GM12878 (cell line): ENCODE measurements at regions of chr16 and their contacts with region 1.

Region 1: GRCh38 chr16:83952940-83953795 is at the start of gene OSGIN1:
- DNase-seq: peak; percentile 25
- ATAC-seq: peak; percentile 91
- H3K4me3 ChIP-seq: 0 out of 2 replicates have a peak within 1 kb of the TSS, but pooled peaks have one; percentile 16
- H3K27ac ChIP-seq: no peak within 1 kb of the TSS
- H3K4me1 ChIP-seq: peaks cover 3% of the 10 kb centered on the region; the same call in 1 of the 2 replicates
- H3K27me3 ChIP-seq: no peaks in the 10 kb centered on the region
- CTCF ChIP-seq: no peak
- EP300 ChIP-seq: no peak
- POLR2A ChIP-seq: peak; percentile 57
- RAD21 ChIP-seq: no peak
- polyA plus RNA-seq, gene OSGIN1: not detected

Region 2: GRCh38 chr16:84308120-84308519 is 355.0 kb after region 1 on chr16:
- CTCF ChIA-PET with region 1: no interaction called
- POLR2A ChIA-PET with region 1: no interaction called
- RAD21 ChIA-PET with region 1: no interaction called
- SMC1A ChIA-PET with region 1: no interaction called
- in situ Hi-C with region 1: no loop called
- intact Hi-C with region 1: loop called (anchors 10 kb)
- DNase-seq: no peak
- ATAC-seq: peak; percentile 78
- H3K4me3 ChIP-seq: no peak overlapping the region
- H3K27ac ChIP-seq: no peak overlapping the region
- H3K4me1 ChIP-seq: no peaks in the 10 kb centered on the region
- H3K27me3 ChIP-seq: no peaks in the 10 kb centered on the region; a peak in 1 of 4 replicates
- CTCF ChIP-seq: peak; percentile 16 to 52 (median 41); a peak in 3 of 6 replicates
- EP300 ChIP-seq: no peak
- POLR2A ChIP-seq: no peak
- RAD21 ChIP-seq: peak; percentile 35; the same call in 1 of the 2 replicates